Caco-2 (cell line): ENCODE measurements at regions of chr1 and their contacts with region 1.

Region 1: DNA sequence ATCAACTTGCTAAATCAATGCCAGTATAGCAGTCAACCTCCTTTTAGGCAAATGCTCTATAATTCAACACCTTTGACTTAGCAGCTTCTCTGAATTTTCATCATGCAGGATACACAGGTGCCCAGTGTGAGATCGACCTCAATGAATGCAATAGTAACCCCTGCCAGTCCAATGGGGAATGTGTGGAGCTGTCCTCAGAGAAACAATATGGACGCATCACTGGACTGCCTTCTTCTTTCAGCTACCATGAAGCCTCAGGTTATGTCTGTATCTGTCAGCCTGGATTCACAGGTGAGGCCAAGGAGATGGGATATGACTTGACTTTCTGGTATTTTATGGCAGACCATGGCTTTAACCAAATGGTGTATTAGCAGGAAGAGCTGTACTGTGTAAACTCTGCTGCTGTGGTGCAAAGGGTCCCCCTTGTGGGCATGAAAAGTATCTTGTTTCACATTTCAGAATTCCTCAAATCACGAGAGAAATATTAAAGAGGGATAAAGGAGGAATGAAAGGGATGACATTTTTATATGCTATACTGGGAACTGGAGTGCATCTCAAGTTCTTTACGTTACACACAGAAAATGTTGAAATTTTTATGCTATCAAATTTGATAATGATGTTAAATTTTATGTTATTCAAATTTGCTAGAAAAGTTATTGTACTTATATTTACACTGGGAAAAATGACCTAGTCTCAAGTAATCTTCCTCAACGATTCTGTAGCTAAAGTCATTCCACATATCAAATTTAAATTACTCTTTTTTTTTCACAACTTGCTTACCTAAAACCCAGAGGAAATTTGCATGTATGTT is 88.9 kb downstream of the CRB1 start:
- DNase-seq: peak in 1 of 2 experiments; percentile 53
- H3K4me3 ChIP-seq: no peak overlapping the region
- H3K4me3 Mint-ChIP-seq: no peak overlapping the region
- H3K27ac Mint-ChIP-seq: no peak overlapping the region
- H3K4me1 ChIP-seq: no peaks in the 10 kb centered on the region
- H3K4me1 Mint-ChIP-seq: no peaks in the 10 kb centered on the region
- H3K27me3 ChIP-seq: no peaks in the 10 kb centered on the region
- H3K27me3 Mint-ChIP-seq: no peaks in the 10 kb centered on the region
- CTCF ChIP-seq: peak; percentile 59 to 71

Region 2: GRCh38 chr1:196723322-196724185 is 633.4 kb before region 1 on chr1:
- CTCF ChIA-PET with region 1: no interaction called
- POLR2A ChIA-PET with region 1: no interaction called
- intact Hi-C with region 1: loop called (anchors 1 kb)
- DNase-seq: peak; percentile 67 to 74
- H3K4me3 ChIP-seq: no peak overlapping the region
- H3K4me3 Mint-ChIP-seq: no peak overlapping the region
- H3K27ac Mint-ChIP-seq: no peak overlapping the region
- H3K4me1 ChIP-seq: no peaks in the 10 kb centered on the region
- H3K4me1 Mint-ChIP-seq: no peaks in the 10 kb centered on the region
- H3K27me3 ChIP-seq: no peaks in the 10 kb centered on the region
- H3K27me3 Mint-ChIP-seq: no peaks in the 10 kb centered on the region
- CTCF ChIP-seq: peak; percentile 75 to 79

Region 3: GRCh38 chr1:196738730-196739129 is 618.2 kb before region 1 on chr1:
- CTCF ChIA-PET with region 1: no interaction called
- POLR2A ChIA-PET with region 1: no interaction called
- intact Hi-C with region 1: loop called (anchors 2 kb)
- DNase-seq: no peak
- H3K4me3 ChIP-seq: no peak overlapping the region
- H3K4me3 Mint-ChIP-seq: no peak overlapping the region
- H3K27ac Mint-ChIP-seq: no peak overlapping the region
- H3K4me1 ChIP-seq: no peaks in the 10 kb centered on the region
- H3K4me1 Mint-ChIP-seq: peaks cover 6% of the 10 kb centered on the region
- H3K27me3 ChIP-seq: no peaks in the 10 kb centered on the region
- H3K27me3 Mint-ChIP-seq: no peaks in the 10 kb centered on the region
- CTCF ChIP-seq: no peak

Region 4: GRCh38 chr1:197224160-197224559 is 132.8 kb before region 1 on chr1:
- CTCF ChIA-PET with region 1: no interaction called
- POLR2A ChIA-PET with region 1: no interaction called
- intact Hi-C with region 1: loop called (anchors 1 kb)
- DNase-seq: no peak
- H3K4me3 ChIP-seq: no peak overlapping the region
- H3K4me3 Mint-ChIP-seq: no peak overlapping the region
- H3K27ac Mint-ChIP-seq: no peak overlapping the region
- H3K4me1 ChIP-seq: no peaks in the 10 kb centered on the region
- H3K4me1 Mint-ChIP-seq: peaks cover 6% of the 10 kb centered on the region
- H3K27me3 ChIP-seq: no peaks in the 10 kb centered on the region
- H3K27me3 Mint-ChIP-seq: no peaks in the 10 kb centered on the region
- CTCF ChIP-seq: no peak

Region 5: DNA sequence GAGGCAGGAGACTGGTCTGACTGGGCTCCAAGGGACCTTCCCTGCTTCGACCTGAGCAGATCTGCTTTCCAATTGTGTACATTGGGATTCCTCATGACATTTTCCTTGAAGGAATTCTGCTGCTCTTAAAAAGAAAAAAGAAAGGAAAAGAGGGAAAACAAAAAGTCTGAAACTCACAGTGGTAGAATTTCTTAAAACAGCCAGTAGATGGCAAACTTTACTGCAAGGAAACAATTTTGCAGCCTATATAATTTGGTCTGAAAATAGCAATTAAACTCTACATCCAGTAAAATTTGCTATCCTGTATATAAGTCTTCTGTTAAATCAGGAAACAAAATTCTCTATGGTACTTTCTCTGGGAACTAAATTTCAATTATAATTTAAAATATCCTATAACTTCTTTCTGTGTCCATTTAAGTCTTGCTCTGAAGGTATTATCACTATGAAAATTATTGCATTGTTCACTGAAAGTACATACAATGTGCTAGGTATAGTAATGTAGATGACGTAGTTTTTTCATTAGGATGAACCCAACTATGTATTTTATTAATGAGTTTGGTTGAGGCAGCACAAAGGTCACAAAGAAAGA is 29.1 kb before region 1 on chr1:
- CTCF ChIA-PET with region 1: no interaction called
- POLR2A ChIA-PET with region 1: no interaction called
- intact Hi-C with region 1: loop called (anchors 1 kb)
- DNase-seq: no peak
- H3K4me3 ChIP-seq: no peak overlapping the region
- H3K4me3 Mint-ChIP-seq: no peak overlapping the region
- H3K27ac Mint-ChIP-seq: no peak overlapping the region
- H3K4me1 ChIP-seq: no peaks in the 10 kb centered on the region
- H3K4me1 Mint-ChIP-seq: no peaks in the 10 kb centered on the region
- H3K27me3 ChIP-seq: no peaks in the 10 kb centered on the region
- H3K27me3 Mint-ChIP-seq: peaks cover 3% of the 10 kb centered on the region
- CTCF ChIP-seq: peak; percentile 41 to 43

Region 6: DNA sequence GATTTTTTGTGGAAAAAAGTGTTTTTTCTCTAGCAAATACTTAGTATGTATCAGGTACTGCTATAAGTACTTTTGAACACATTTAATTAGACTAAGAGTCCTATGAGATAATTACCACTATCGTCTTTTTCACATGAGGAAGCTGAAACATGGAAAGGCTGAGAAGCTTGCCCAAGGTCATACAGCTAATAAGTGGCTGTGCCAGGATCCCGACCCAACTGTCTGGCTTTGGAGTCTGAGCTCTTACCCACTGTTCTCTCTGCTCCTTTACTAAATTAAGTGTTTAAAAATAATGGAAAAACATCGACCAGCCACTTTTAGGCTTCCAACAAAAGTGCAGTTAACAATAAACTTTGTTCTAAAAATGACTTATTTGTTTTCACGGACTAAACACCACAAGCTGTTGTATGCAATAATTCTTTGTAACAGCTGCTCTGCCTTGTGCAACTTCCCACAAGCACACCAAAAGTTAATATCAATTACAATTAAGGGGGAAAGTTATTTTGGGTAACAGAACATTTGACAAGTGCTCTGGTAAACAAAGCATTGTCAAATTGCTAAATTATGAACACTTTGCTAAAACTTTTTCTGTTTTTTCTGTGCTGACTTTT is 13.2 kb before region 1 on chr1:
- CTCF ChIA-PET with region 1: no interaction called
- POLR2A ChIA-PET with region 1: no interaction called
- intact Hi-C with region 1: no loop called
- DNase-seq: no peak
- H3K4me3 ChIP-seq: no peak overlapping the region
- H3K4me3 Mint-ChIP-seq: no peak overlapping the region
- H3K27ac Mint-ChIP-seq: no peak overlapping the region
- H3K4me1 ChIP-seq: no peaks in the 10 kb centered on the region
- H3K4me1 Mint-ChIP-seq: peaks cover 10% of the 10 kb centered on the region
- H3K27me3 ChIP-seq: no peaks in the 10 kb centered on the region
- H3K27me3 Mint-ChIP-seq: peaks cover 6% of the 10 kb centered on the region
- CTCF ChIP-seq: no peak

Region 7: DNA sequence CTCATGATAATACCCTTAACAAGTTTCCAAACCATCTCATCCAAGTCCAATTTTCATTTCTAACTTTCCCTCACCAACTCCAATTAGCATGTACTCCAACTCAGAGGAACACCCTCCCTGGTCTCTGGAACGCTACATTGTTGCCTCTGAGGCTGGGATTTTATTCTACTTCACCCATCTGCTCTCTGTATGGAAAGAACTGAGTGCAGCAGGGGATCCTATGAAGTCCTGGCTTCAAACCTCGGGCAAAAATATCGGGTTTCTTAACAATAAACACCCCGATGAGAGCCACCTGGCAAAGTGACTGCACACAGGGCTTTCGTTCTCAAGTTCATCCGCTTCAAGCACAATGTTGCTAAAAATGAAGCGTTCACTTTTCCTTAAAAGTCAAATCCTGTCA is 10.7 kb after region 1 on chr1:
- CTCF ChIA-PET with region 1: no interaction called
- POLR2A ChIA-PET with region 1: no interaction called
- intact Hi-C with region 1: no loop called
- DNase-seq: no peak
- H3K4me3 ChIP-seq: no peak overlapping the region
- H3K4me3 Mint-ChIP-seq: no peak overlapping the region
- H3K27ac Mint-ChIP-seq: no peak overlapping the region
- H3K4me1 ChIP-seq: no peaks in the 10 kb centered on the region
- H3K4me1 Mint-ChIP-seq: no peaks in the 10 kb centered on the region
- H3K27me3 ChIP-seq: no peaks in the 10 kb centered on the region
- H3K27me3 Mint-ChIP-seq: peaks cover 14% of the 10 kb centered on the region
- CTCF ChIP-seq: no peak